ENCODE measurements at regions of chr5 and their contacts with region 1.

Region 1: GRCh38 chr5:139186752-139187659 is 11.2 kb downstream of the SIL1 start:
- DNase-seq: no peak
- ATAC-seq: no peak
- H3K4me3 ChIP-seq: no peak overlapping the region
- H3K27ac ChIP-seq: no peak overlapping the region
- H3K4me1 ChIP-seq: peaks cover 0 to 5% of the 10 kb centered on the region in 2 donors
- H3K27me3 ChIP-seq: no peaks in the 10 kb centered on the region

Region 2: DNA sequence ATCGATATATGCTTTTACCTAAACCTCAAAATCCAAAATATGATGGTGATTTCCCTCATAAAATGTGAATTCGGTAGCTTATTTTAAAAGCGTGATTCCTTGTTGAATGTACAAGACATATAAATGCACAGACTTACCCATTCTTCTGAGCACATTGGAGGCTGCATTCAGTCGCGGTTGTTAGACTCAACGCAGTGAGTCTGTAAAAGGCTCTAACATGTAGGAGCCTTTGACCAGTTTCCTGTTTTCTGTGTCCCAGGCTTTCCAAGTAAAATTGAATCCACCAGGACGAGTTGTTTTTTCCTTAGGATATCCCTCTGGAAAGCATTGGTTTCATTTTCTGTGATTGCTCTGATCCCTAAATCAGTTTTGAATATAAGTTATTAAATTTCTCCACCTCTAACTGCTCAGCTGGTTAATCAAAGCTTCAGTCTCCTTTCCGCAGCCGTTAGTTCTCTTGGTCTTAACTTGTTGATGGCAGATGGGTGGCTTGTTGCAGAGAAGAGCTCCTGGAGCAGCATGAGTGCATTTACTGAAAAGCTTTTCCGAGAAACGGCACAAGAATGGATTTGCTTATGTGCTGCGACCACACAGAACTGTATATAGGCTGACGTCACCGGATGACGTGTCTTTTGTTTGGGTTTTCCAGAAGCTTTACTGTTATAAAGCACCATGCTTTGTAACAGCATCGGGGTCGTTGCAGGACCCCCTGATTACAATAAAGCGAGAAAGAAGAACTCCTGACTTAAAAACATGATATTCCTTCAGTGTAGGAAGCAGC is 312.0 kb before region 1 on chr5 and contains the start of gene LRRTM2:
- intact Hi-C with region 1: no loop called
- DNase-seq: no peak
- ATAC-seq: no peak
- H3K4me3 ChIP-seq: no peak within 1 kb of the TSS
- H3K27ac ChIP-seq: no peak within 1 kb of the TSS
- H3K4me1 ChIP-seq: peaks cover 8 to 9% of the 10 kb centered on the region in 2 donors
- H3K27me3 ChIP-seq: no peaks in the 10 kb centered on the region
- total RNA-seq, gene LRRTM2: 0.24 to 0.36 TPM

Region 3: DNA sequence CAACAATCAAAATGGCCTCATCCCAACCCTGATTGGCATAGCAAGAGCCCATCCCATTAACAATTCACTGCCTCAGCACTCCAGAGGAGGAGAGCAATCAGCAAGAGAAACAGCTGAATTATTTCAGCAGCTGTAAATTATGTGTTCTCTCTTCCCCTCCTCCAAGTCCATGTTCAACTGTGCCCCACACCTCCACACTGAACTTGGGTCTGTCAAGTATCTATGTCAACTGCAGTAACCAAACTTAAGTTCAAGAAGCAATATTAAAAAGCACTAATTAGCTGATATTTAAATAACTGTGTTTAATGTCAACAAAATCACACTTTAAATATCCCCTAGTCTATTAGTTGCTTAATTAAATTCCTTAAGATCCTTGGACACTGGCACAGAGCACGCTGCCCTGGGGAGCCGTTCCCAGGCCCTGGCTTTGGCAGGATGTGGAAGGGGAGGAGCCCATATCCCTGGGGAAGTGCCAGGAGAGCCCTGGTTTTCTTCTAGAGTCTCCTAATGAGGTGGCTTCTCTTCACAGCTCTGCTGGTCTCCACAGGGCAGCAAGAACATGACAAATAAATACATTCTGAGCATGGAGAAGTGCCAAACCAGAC is 39.4 kb before region 1 on chr5:
- intact Hi-C with region 1: loop called (anchors 5 to 10 kb)
- DNase-seq: peak; percentile 82 to 88
- ATAC-seq: peak; percentile 82
- H3K4me3 ChIP-seq: no peak overlapping the region
- H3K27ac ChIP-seq: peak overlapping the region in 1 of 2 donors; percentile 52
- H3K4me1 ChIP-seq: no peaks in the 10 kb centered on the region
- H3K27me3 ChIP-seq: no peaks in the 10 kb centered on the region

Measured in aorta (tissue), 5 donors.